Natural killer cell (primary cell): ENCODE measurements at regions of chr15 and their contacts with region 1.

Region 1: DNA sequence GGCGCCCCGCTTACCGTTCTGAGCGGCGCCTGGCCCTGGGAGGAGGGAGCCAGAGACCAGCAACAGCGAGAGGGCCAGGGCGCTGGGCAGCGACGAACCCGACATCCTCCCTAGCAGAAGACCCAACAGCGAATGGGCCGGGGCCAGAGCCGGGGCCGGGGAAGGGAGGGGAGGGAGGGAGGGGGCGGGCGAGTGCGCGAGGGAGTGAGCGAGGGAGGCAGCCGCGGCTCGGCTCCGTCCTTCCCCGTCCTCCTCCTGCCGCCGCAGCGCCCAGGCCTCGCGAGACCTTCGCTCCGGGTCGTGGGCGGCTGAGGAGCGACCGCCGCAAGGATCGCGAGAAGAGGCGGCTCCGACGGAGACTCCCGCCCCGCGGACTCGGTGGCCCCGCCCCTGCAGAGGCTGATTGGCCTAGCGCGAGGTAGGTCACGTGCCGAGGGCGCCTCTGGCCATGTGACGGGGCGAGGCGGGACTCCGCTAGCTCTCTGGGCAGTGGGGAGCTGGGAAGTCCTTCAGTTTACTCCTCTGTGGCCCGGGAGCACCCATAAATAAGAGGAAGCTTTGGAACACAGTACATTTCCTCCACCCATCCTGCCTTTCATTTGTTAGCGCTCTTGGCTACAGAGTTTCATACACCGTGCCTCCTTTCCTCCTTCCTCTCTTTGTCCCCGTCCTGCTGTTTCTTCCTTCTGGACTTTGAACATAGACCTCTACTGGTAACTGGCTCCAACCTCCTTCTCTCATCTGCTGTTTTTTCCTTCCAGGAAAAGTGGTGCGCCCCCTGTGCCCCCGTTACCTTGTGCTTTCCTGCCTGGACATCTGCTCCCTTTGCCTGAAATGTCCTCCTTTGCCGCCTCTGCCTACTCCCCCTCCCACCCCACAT is at the start of gene NPTN:
- DNase-seq: peak; percentile 98
- ATAC-seq: peak; percentile 92 to 97 (median 92)
- H3K4me3 ChIP-seq: peak within 1 kb of the TSS; percentile 87
- H3K4me3 Mint-ChIP-seq: peak within 1 kb of the TSS; percentile 93
- H3K27ac ChIP-seq: peak within 1 kb of the TSS; percentile 73
- H3K27ac Mint-ChIP-seq: peak within 1 kb of the TSS; percentile 75 to 92
- H3K4me1 ChIP-seq: peaks cover 18% of the 10 kb centered on the region
- H3K4me1 Mint-ChIP-seq: peaks cover 45 to 60% of the 10 kb centered on the region in 2 donors
- H3K27me3 ChIP-seq: no peaks in the 10 kb centered on the region
- H3K27me3 Mint-ChIP-seq: peaks cover 14 to 19% of the 10 kb centered on the region in 2 donors
- CTCF ChIP-seq: no peak
- total RNA-seq, gene NPTN: 37.9 to 46.9 (median 46.4) TPM

Region 2: GRCh38 chr15:73414876-73415275 is 218.5 kb before region 1 on chr15:
- intact Hi-C with region 1: no loop called
- DNase-seq: no peak
- ATAC-seq: no peak
- H3K4me3 ChIP-seq: no peak overlapping the region
- H3K4me3 Mint-ChIP-seq: no peak overlapping the region
- H3K27ac ChIP-seq: no peak overlapping the region
- H3K27ac Mint-ChIP-seq: no peak overlapping the region
- H3K4me1 ChIP-seq: no peaks in the 10 kb centered on the region
- H3K4me1 Mint-ChIP-seq: no peaks in the 10 kb centered on the region
- H3K27me3 ChIP-seq: peaks cover 3% of the 10 kb centered on the region
- H3K27me3 Mint-ChIP-seq: peaks cover 14 to 17% of the 10 kb centered on the region in 2 donors
- CTCF ChIP-seq: no peak

Region 3: GRCh38 chr15:73437543-73438109 is 195.7 kb before region 1 on chr15:
- intact Hi-C with region 1: no loop called
- DNase-seq: no peak
- ATAC-seq: no peak
- H3K4me3 ChIP-seq: no peak overlapping the region
- H3K4me3 Mint-ChIP-seq: no peak overlapping the region
- H3K27ac ChIP-seq: no peak overlapping the region
- H3K27ac Mint-ChIP-seq: no peak overlapping the region
- H3K4me1 ChIP-seq: no peaks in the 10 kb centered on the region
- H3K4me1 Mint-ChIP-seq: no peaks in the 10 kb centered on the region
- H3K27me3 ChIP-seq: no peaks in the 10 kb centered on the region
- H3K27me3 Mint-ChIP-seq: peaks cover 14 to 39% of the 10 kb centered on the region in 2 donors
- CTCF ChIP-seq: no peak

Region 4: DNA sequence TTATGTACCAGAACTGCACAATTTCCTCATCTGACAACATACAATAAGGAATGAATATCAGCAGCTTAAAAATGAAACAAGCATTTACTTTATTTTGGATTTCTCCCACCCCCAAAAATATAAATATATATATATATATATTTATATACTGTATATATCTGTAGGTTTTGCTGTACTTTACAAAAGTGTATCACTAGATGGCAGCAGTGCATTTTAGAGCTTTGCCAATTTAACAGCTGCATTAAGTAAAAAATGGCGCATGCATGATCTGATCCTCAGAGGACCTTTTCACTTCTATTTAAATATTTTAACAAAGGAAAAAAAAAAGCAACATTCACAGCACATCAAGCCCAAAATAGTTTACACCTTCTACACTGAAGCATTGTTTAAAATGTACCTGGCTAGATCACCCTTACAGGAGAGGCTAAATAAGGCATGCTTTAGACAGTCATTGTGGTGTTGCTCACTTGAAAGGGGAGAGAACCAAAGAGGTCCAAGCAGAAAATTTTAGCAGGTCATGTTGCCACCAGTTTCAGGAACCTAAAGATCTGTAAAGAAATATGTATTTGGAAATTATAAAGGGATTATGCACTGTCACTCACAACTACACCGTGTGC is 72.7 kb before region 1 on chr15:
- intact Hi-C with region 1: loop called (anchors 1 kb)
- DNase-seq: peak in 1 of 2 donors; percentile 67
- ATAC-seq: peak; percentile 55 to 72 (median 69)
- H3K4me3 ChIP-seq: no peak overlapping the region
- H3K4me3 Mint-ChIP-seq: no peak overlapping the region
- H3K27ac ChIP-seq: no peak overlapping the region
- H3K27ac Mint-ChIP-seq: no peak overlapping the region
- H3K4me1 ChIP-seq: no peaks in the 10 kb centered on the region
- H3K4me1 Mint-ChIP-seq: peaks cover 0 to 9% of the 10 kb centered on the region in 2 donors
- H3K27me3 ChIP-seq: no peaks in the 10 kb centered on the region
- H3K27me3 Mint-ChIP-seq: no peaks in the 10 kb centered on the region
- CTCF ChIP-seq: peak; percentile 48

Region 5: DNA sequence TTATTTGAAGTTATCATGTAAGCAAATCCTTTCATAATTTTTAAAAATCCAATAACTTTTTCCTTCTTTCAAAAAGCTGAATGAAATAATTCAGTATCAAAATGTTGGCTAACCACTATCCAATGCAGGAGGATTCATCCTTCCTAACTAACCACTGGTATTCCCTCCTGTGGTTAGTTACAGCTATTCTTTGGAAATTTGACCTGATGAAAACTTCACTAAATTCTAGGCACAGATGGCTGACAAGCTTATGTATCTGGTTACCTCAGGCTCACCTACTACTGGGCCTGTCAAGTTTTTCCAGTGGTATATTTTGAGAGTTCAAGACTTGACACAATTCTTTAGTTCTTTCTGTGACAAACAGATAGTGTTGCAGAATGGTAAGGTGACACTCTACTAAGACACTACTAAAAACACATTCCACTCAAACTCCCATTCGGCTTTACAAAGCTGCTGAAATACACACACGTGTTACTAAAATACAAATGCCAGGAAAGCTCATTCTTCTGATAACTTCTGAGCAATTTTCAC is 16.0 kb before region 1 on chr15:
- intact Hi-C with region 1: no loop called
- DNase-seq: no peak
- ATAC-seq: no peak
- H3K4me3 ChIP-seq: no peak overlapping the region
- H3K4me3 Mint-ChIP-seq: no peak overlapping the region
- H3K27ac ChIP-seq: no peak overlapping the region
- H3K27ac Mint-ChIP-seq: no peak overlapping the region
- H3K4me1 ChIP-seq: no peaks in the 10 kb centered on the region
- H3K4me1 Mint-ChIP-seq: peaks cover 24 to 37% of the 10 kb centered on the region in 2 donors
- H3K27me3 ChIP-seq: no peaks in the 10 kb centered on the region
- H3K27me3 Mint-ChIP-seq: no peaks in the 10 kb centered on the region
- CTCF ChIP-seq: no peak